ENCODE measurements at regions of chr9 and their contacts with region 1.

Region 1: GRCh38 chr9:124839612-124840299 is 13.5 kb upstream of the WDR38 start:
- DNase-seq: no peak
- H3K4me3 ChIP-seq: no peak overlapping the region
- H3K27ac ChIP-seq: no peak overlapping the region
- H3K27me3 ChIP-seq: no peaks in the 10 kb centered on the region
- CTCF ChIP-seq: peak; percentile 67

Region 2: GRCh38 chr9:124812401-124813016 is 27.2 kb before region 1 on chr9:
- CTCF ChIA-PET with region 1: interaction called, 10 read pairs
- POLR2A ChIA-PET with region 1: no interaction called
- DNase-seq: peak; percentile 95
- H3K4me3 ChIP-seq: no peak overlapping the region
- H3K27ac ChIP-seq: peak overlapping the region; percentile 98
- H3K27me3 ChIP-seq: no peaks in the 10 kb centered on the region
- CTCF ChIP-seq: peak; percentile 18; the same call in 1 of the 2 replicates